MCF 10A (cell line): ENCODE measurements at regions of chr15 and their contacts with region 1.

Region 1: GRCh38 chr15:83747050-83747717 is 93.3 kb downstream of the ADAMTSL3 start:
- DNase-seq: peak; percentile 60
- H3K4me3 Mint-ChIP-seq: peak overlapping the region; percentile 37
- H3K27ac Mint-ChIP-seq: no peak overlapping the region
- H3K4me1 Mint-ChIP-seq: peaks cover 10% of the 10 kb centered on the region
- H3K27me3 Mint-ChIP-seq: no peaks in the 10 kb centered on the region
- CTCF ChIP-seq: peak; percentile 33

Region 2: GRCh38 chr15:83564975-83565532 is 182.1 kb before region 1 on chr15:
- CTCF ChIA-PET with region 1: interaction called, 4 read pairs
- POLR2A ChIA-PET with region 1: no interaction called
- intact Hi-C with region 1: loop called (anchors 2 kb)
- DNase-seq: no peak
- H3K4me3 Mint-ChIP-seq: no peak overlapping the region
- H3K27ac Mint-ChIP-seq: no peak overlapping the region
- H3K4me1 Mint-ChIP-seq: peaks cover 6% of the 10 kb centered on the region
- H3K27me3 Mint-ChIP-seq: no peaks in the 10 kb centered on the region
- CTCF ChIP-seq: no peak

Region 3: GRCh38 chr15:83571820-83572707 is 175.1 kb before region 1 on chr15:
- CTCF ChIA-PET with region 1: interaction called, 4 read pairs
- POLR2A ChIA-PET with region 1: no interaction called
- intact Hi-C with region 1: loop called (anchors 2 kb)
- DNase-seq: peak; percentile 43
- H3K4me3 Mint-ChIP-seq: no peak overlapping the region
- H3K27ac Mint-ChIP-seq: no peak overlapping the region
- H3K4me1 Mint-ChIP-seq: peaks cover 7% of the 10 kb centered on the region
- H3K27me3 Mint-ChIP-seq: no peaks in the 10 kb centered on the region
- CTCF ChIP-seq: peak; percentile 64

Region 4: DNA sequence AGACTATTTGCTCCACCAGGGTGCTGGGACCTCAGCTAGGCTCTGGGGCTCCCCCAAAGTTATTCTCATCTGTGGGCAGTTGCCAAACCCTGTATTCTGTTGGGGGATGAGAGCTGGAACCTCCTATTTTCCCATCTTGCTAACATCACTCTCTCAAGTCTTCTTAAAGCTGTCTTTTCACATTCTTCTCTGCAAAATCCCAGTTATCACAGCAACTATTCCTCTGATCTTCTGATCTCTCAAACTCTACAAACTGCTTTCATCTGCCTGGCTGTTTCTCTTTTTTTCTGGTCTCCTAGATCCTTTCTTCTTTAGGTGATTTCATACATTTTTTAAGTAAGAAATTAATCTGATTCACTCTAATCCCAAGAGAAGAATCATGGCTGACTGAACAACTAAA is 104.0 kb before region 1 on chr15:
- CTCF ChIA-PET with region 1: no interaction called
- POLR2A ChIA-PET with region 1: no interaction called
- intact Hi-C with region 1: no loop called
- DNase-seq: no peak
- H3K4me3 Mint-ChIP-seq: no peak overlapping the region
- H3K27ac Mint-ChIP-seq: no peak overlapping the region
- H3K4me1 Mint-ChIP-seq: no peaks in the 10 kb centered on the region
- H3K27me3 Mint-ChIP-seq: peaks cover 12% of the 10 kb centered on the region
- CTCF ChIP-seq: no peak

Region 5: GRCh38 chr15:83653639-83654378 is 93.4 kb before region 1 on chr15 and contains the start of gene ADAMTSL3:
- CTCF ChIA-PET with region 1: no interaction called
- POLR2A ChIA-PET with region 1: no interaction called
- intact Hi-C with region 1: loop called (anchors 2 kb)
- DNase-seq: peak; percentile 71
- H3K4me3 Mint-ChIP-seq: peak within 1 kb of the TSS; percentile 50
- H3K27ac Mint-ChIP-seq: no peak within 1 kb of the TSS
- H3K4me1 Mint-ChIP-seq: no peaks in the 10 kb centered on the region
- H3K27me3 Mint-ChIP-seq: no peaks in the 10 kb centered on the region
- CTCF ChIP-seq: no peak
- total RNA-seq, gene ADAMTSL3: 1.2 TPM in 2 replicates